A673 (cell line): ENCODE measurements at regions of chr2 and their contacts with region 1.

Region 1: DNA sequence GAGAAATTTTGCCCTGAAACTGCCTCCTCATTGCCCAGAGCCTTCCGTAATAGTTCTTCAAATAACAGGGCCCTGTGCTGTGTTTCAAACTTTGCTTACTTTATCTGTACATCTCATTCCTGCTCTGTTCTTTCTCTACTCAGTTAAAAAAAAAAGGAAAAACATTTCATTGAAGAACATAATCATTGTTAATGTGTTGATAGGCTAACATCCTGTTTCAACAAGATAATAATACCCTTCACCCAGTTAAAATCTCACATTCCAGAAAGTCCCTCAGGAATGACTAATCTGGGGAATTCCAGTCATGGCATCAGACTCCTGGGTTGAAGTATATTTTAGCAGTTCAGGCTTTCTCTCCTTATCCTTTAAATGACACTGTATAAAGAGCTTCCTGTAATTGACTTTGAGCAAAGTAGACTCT is 45.6 kb upstream of the ITGAV start:
- DNase-seq: peak; percentile 94
- H3K4me3 ChIP-seq: no peak overlapping the region
- H3K27ac ChIP-seq: peak overlapping the region; percentile 81
- H3K4me1 ChIP-seq: peaks cover 34% of the 10 kb centered on the region
- H3K27me3 ChIP-seq: no peaks in the 10 kb centered on the region
- CTCF ChIP-seq: no peak

Region 2: DNA sequence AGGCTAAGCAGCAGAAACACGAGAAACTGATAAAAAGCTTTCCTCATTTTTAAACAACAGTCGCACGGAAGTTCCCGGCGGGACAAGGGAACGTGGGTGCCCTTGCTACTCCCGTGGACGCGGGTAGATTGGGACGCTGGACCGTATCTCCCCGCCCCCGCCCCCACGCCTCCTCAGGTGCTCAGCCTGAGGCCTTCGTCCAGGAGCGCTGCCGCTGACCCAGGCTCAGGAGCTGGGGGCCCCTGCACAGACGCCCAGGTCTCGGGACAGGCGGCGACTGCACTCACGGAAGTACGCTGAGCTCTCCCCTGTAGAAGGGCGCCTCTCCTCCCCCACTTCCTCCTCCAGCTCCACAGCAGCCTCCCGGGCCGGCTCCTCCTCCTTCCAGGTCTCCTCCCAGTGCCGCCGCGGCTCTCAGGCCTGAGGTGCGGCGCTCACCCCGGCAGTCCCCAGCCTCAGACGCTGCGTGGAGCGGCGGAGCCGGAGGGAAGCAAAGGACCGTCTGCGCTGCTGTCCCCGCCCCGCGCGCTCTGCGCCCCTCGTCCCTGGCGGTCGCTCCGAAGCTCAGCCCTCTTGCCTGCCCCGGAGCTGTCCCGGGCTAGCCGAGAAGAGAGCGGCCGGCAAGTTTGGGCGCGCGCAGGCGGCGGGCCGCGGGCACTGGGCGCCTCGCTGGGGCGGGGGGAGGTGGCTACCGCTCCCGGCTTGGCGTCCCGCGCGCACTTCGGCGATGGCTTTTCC is 45.5 kb after region 1 on chr2 and contains the start of gene ITGAV:
- CTCF ChIA-PET with region 1: no interaction called
- POLR2A ChIA-PET with region 1: no interaction called
- intact Hi-C with region 1: loop called (anchors 5 kb)
- DNase-seq: peak; percentile 97
- H3K4me3 ChIP-seq: peak within 1 kb of the TSS; percentile 92
- H3K27ac ChIP-seq: peak within 1 kb of the TSS; percentile 88
- H3K4me1 ChIP-seq: no peaks in the 10 kb centered on the region
- H3K27me3 ChIP-seq: no peaks in the 10 kb centered on the region
- CTCF ChIP-seq: no peak
- total RNA-seq, gene ITGAV: 28.4 and 33.7 TPM in 2 replicates